Caco-2 (cell line): ENCODE measurements at regions of chr9 and their contacts with region 1.

Region 1: GRCh38 chr9:110256380-110257096 is at the start of gene TXN:
- DNase-seq: peak; percentile 88 to 90
- H3K4me3 ChIP-seq: peak within 1 kb of the TSS; percentile 96
- H3K4me3 Mint-ChIP-seq: peak within 1 kb of the TSS; percentile 98
- H3K27ac Mint-ChIP-seq: peak within 1 kb of the TSS; percentile 99
- H3K4me1 ChIP-seq: peaks cover 39% of the 10 kb centered on the region
- H3K4me1 Mint-ChIP-seq: peaks cover 26% of the 10 kb centered on the region
- H3K27me3 ChIP-seq: no peaks in the 10 kb centered on the region
- H3K27me3 Mint-ChIP-seq: no peaks in the 10 kb centered on the region
- CTCF ChIP-seq: no peak
- total RNA-seq, gene TXN: 446 and 476 TPM in 2 replicates

Region 2: GRCh38 chr9:110217656-110218099 is 38.9 kb before region 1 on chr9:
- CTCF ChIA-PET with region 1: interaction called, 12 read pairs
- POLR2A ChIA-PET with region 1: interaction called, 20 read pairs
- intact Hi-C with region 1: loop called (anchors 2 kb)
- DNase-seq: no peak
- H3K4me3 ChIP-seq: no peak overlapping the region
- H3K4me3 Mint-ChIP-seq: no peak overlapping the region
- H3K27ac Mint-ChIP-seq: no peak overlapping the region
- H3K4me1 ChIP-seq: peaks cover 80% of the 10 kb centered on the region
- H3K4me1 Mint-ChIP-seq: peaks cover 47% of the 10 kb centered on the region
- H3K27me3 ChIP-seq: no peaks in the 10 kb centered on the region
- H3K27me3 Mint-ChIP-seq: no peaks in the 10 kb centered on the region
- CTCF ChIP-seq: peak; percentile 61 to 63

Region 3: GRCh38 chr9:110283751-110284150 is 27.2 kb after region 1 on chr9:
- CTCF ChIA-PET with region 1: no interaction called
- POLR2A ChIA-PET with region 1: interaction called, 12 read pairs
- intact Hi-C with region 1: loop called (anchors 2 kb)
- DNase-seq: peak in 1 of 2 experiments; percentile 54
- H3K4me3 ChIP-seq: no peak overlapping the region
- H3K4me3 Mint-ChIP-seq: no peak overlapping the region
- H3K27ac Mint-ChIP-seq: no peak overlapping the region
- H3K4me1 ChIP-seq: peaks cover 40% of the 10 kb centered on the region
- H3K4me1 Mint-ChIP-seq: peaks cover 19% of the 10 kb centered on the region
- H3K27me3 ChIP-seq: no peaks in the 10 kb centered on the region
- H3K27me3 Mint-ChIP-seq: no peaks in the 10 kb centered on the region
- CTCF ChIP-seq: no peak

Region 4: DNA sequence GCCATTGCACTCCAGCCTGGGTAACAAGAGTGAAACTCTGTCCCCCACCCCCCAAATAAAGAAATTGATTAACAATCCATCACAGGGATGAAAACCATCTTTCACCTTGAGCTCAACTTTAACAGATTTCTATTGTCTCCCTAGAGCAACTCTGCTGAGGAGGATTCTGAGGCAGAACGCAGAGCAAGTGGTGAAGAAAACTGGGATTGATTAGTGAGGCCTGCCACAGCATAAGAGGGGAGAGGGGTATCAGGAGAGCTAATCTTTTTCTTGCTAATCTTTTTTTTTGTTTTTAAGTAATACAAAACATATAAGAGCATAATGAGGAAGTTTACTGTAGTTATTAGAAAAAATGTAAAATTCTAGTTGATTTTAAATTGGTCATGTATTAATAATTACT is 72.2 kb after region 1 on chr9:
- CTCF ChIA-PET with region 1: no interaction called
- POLR2A ChIA-PET with region 1: interaction called, 11 read pairs
- intact Hi-C with region 1: no loop called
- DNase-seq: no peak
- H3K4me3 ChIP-seq: no peak overlapping the region
- H3K4me3 Mint-ChIP-seq: no peak overlapping the region
- H3K27ac Mint-ChIP-seq: no peak overlapping the region
- H3K4me1 ChIP-seq: no peaks in the 10 kb centered on the region; the same call in 1 of the 2 replicates
- H3K4me1 Mint-ChIP-seq: no peaks in the 10 kb centered on the region
- H3K27me3 ChIP-seq: no peaks in the 10 kb centered on the region
- H3K27me3 Mint-ChIP-seq: no peaks in the 10 kb centered on the region
- CTCF ChIP-seq: no peak

Region 5: DNA sequence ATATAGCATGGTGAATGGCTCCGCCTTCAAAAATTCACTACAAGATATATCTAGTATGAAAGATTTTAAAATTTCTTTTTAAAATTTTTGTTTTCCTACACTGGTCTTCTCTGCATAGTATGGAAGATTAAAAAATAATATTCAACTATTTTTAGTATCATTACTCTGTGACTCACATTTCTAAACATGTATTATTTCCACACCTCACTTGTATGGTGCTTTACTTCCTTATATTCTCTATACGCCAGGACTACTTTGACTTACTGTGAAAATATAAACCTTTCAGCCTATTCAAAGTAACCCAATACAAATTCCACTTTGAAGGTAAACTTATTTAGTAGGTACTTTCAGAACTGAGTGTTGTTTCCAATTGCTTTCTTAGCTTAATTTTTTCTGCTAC is 107.9 kb after region 1 on chr9:
- CTCF ChIA-PET with region 1: no interaction called
- POLR2A ChIA-PET with region 1: interaction called, 19 read pairs
- intact Hi-C with region 1: no loop called
- DNase-seq: no peak
- H3K4me3 ChIP-seq: no peak overlapping the region
- H3K4me3 Mint-ChIP-seq: no peak overlapping the region
- H3K27ac Mint-ChIP-seq: no peak overlapping the region
- H3K4me1 ChIP-seq: no peaks in the 10 kb centered on the region
- H3K4me1 Mint-ChIP-seq: no peaks in the 10 kb centered on the region
- H3K27me3 ChIP-seq: no peaks in the 10 kb centered on the region
- H3K27me3 Mint-ChIP-seq: no peaks in the 10 kb centered on the region
- CTCF ChIP-seq: no peak